Testis (tissue), 5 donors: ENCODE measurements at regions of chr3 and their contacts with region 1.

Region 1: GRCh38 chr3:113264283-113265131 is 53.1 kb downstream of the BOC start:
- DNase-seq: no peak
- H3K4me3 ChIP-seq: no peak overlapping the region
- H3K27ac ChIP-seq: peak overlapping the region in 1 of 2 donors; percentile 39
- H3K4me1 ChIP-seq: peaks cover 15% of the 10 kb centered on the region
- H3K27me3 ChIP-seq: no peaks in the 10 kb centered on the region
- CTCF ChIP-seq: no peak
- POLR2A ChIP-seq: no peak

Region 2: GRCh38 chr3:113013593-113013992 is 250.9 kb before region 1 on chr3:
- intact Hi-C with region 1: no loop called
- DNase-seq: no peak
- H3K4me3 ChIP-seq: no peak overlapping the region
- H3K27ac ChIP-seq: no peak overlapping the region
- H3K4me1 ChIP-seq: no peaks in the 10 kb centered on the region
- H3K27me3 ChIP-seq: no peaks in the 10 kb centered on the region
- CTCF ChIP-seq: no peak
- POLR2A ChIP-seq: no peak

Region 3: DNA sequence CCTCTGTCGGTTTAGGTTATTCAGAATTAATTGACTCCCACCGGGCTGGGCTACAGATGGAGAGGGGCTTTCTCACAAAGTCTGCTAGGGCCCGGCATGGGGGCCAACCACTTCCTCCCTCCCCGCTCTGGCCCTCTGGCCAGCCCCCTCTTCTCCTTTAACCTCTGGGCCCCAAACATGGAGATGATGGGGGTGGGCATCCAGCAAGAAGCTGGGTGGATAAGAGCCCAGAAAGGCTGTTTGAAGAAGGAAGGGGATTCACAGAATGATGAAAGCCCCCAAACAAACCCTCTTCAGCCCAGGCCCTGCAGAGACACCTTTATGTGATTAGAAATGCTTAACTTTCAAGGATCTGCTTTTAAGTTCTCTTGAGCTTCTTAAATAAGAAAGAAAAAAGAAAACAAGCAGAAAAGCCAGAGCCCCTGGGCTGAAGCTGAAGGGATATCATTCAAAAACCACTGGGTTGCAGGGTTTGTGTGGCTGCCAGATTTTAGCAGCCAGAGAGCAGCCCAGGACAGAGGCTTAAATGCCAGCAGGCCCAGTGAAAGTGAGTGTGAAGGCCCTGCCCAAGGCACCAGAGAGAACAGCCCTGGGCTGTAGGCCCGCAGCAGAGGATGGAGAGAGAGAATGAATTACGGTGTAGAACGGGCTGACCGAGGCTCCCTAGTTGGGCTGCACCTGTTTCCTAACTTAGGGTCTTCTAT is 159.6 kb before region 1 on chr3:
- intact Hi-C with region 1: no loop called
- DNase-seq: peak; percentile 17
- H3K4me3 ChIP-seq: no peak overlapping the region
- H3K27ac ChIP-seq: no peak overlapping the region
- H3K4me1 ChIP-seq: no peaks in the 10 kb centered on the region
- H3K27me3 ChIP-seq: no peaks in the 10 kb centered on the region
- CTCF ChIP-seq: no peak
- POLR2A ChIP-seq: no peak

Region 4: DNA sequence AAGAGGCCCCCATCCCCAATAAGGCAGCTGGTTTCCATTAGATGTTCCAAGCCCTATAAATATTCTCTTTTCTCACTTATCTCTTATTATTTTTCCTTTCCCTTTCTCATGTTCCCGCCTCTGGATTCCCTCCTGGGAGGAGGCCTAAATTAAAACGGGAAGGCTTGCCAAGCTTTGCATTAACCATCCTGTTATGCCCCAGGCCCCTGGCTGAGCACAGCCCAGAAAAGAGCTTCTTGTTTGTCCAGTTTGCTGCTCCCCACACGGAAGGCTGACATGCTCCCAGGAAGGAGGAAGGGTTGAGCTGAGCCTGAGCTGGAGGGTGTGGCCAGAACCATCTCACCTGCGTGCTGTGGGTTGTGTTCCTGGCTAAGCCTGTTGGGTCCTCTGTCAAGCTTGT is 116.2 kb before region 1 on chr3:
- intact Hi-C with region 1: loop called (anchors 10 kb)
- DNase-seq: peak; percentile 34
- H3K4me3 ChIP-seq: no peak overlapping the region
- H3K27ac ChIP-seq: peak overlapping the region; percentile 31 to 43
- H3K4me1 ChIP-seq: peaks cover 22% of the 10 kb centered on the region
- H3K27me3 ChIP-seq: no peaks in the 10 kb centered on the region
- CTCF ChIP-seq: no peak
- POLR2A ChIP-seq: no peak